ENCODE measurements at regions of chr22 and their contacts with region 1.

Region 1: GRCh38 chr22:49852898-49853894 is at the start of gene ZBED4:
- DNase-seq: peak; percentile 97 to 99 (median 98)
- H3K4me3 ChIP-seq: peak within 1 kb of the TSS; percentile 62
- H3K4me3 Mint-ChIP-seq: peak within 1 kb of the TSS; percentile 89 to 97 (median 95)
- H3K27ac ChIP-seq: peak within 1 kb of the TSS; percentile 84
- H3K27ac Mint-ChIP-seq: peak within 1 kb of the TSS; percentile 89 to 99 (median 97)
- H3K4me1 ChIP-seq: peaks cover 34% of the 10 kb centered on the region
- H3K4me1 Mint-ChIP-seq: peaks cover 35 to 60% (median 43%) of the 10 kb centered on the region in 3 donors
- H3K27me3 ChIP-seq: no peaks in the 10 kb centered on the region
- H3K27me3 Mint-ChIP-seq: peaks cover 4 to 8% of the 10 kb centered on the region in 2 donors
- total RNA-seq, gene ZBED4: 24.2 to 24.3 TPM

Region 2: DNA sequence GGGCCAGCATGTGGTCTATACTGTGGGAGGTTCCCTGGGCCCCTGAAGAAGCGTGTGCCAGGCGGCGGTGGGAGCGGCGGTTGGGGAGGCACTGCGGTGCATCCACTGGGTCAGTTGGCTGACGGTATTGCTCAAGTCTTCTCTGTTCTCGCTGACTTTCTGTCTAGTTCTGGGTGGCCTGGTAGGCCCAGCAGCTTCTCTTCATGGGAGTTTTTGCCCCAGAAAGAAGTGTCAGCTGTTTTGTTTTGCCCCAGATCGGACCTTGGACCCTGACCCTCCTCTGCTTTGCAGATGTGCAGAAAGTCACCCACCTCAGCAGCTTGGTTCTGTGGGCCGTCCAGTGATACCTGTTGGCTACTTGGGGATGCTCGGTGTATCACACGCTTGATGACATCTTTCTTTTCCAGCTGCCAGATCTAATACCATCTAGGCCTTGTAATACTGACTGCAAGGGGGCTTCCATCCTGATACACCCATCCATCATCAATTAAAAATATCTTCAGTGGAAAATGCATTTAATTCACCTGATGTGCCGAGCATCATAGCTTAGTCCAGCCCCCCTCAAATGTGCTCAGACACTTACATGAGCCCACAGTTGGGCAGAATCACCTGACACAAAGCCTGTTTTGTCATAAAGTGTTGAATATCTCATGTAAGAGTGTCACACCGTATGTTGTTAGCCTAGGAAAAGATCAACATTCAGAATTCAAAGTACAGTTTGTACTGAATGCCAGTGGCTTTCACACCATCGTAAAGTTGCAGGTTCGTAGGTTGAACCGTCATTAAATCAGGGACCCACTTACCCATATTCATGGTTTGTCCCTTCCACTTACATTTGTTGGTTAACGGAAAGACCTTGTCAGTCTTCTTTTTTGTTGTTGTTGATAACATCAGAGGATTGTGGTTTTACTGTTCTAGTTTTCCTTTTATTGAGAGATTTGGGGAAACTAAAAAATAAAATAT is 14.4 kb after region 1 on chr22:
- CTCF ChIA-PET with region 1: interaction called, 5 read pairs
- POLR2A ChIA-PET with region 1: interaction called, 14 read pairs
- DNase-seq: peak in 1 of 5 donors; percentile 81
- H3K4me3 ChIP-seq: peak overlapping the region; percentile 13
- H3K4me3 Mint-ChIP-seq: peak overlapping the region; percentile 46 to 85 (median 68)
- H3K27ac ChIP-seq: peak overlapping the region; percentile 20
- H3K27ac Mint-ChIP-seq: peak overlapping the region; percentile 91 to 97 (median 93)
- H3K4me1 ChIP-seq: peaks cover 45% of the 10 kb centered on the region
- H3K4me1 Mint-ChIP-seq: peaks cover 68 to 84% (median 78%) of the 10 kb centered on the region in 3 donors
- H3K27me3 ChIP-seq: no peaks in the 10 kb centered on the region
- H3K27me3 Mint-ChIP-seq: peaks cover 0 to 4% of the 10 kb centered on the region in 2 donors

Region 3: GRCh38 chr22:49894322-49895054 is 41.3 kb after region 1 on chr22:
- CTCF ChIA-PET with region 1: no interaction called
- POLR2A ChIA-PET with region 1: no interaction called
- DNase-seq: no peak
- H3K4me3 ChIP-seq: no peak overlapping the region
- H3K4me3 Mint-ChIP-seq: peak overlapping the region in 1 of 7 donors; percentile 75
- H3K27ac ChIP-seq: no peak overlapping the region
- H3K27ac Mint-ChIP-seq: peak overlapping the region in 5 of 8 donors; percentile 29 to 91 (median 84)
- H3K4me1 ChIP-seq: no peaks in the 10 kb centered on the region
- H3K4me1 Mint-ChIP-seq: peaks cover 7 to 25% (median 10%) of the 10 kb centered on the region in 3 donors
- H3K27me3 ChIP-seq: no peaks in the 10 kb centered on the region
- H3K27me3 Mint-ChIP-seq: no peaks in the 10 kb centered on the region

Measured in CD8-positive, alpha-beta memory T cell (primary cell).